Activated T-helper 1 cell treated with anti-CD3 and anti-CD28 coated beads, Interleukin-12 subunit alpha, Interleukin-12 subunit beta, Interleukin-2, Interleukin-4 antibody, amounts not matched to agents 30 ng/mL and 10 ng/mL and 1 ng/mL, durations not matched to agents 14 hours and 24 hours and 36 hours (primary cell): ENCODE measurements at regions of chr4 and their contacts with region 1.

Region 1: DNA sequence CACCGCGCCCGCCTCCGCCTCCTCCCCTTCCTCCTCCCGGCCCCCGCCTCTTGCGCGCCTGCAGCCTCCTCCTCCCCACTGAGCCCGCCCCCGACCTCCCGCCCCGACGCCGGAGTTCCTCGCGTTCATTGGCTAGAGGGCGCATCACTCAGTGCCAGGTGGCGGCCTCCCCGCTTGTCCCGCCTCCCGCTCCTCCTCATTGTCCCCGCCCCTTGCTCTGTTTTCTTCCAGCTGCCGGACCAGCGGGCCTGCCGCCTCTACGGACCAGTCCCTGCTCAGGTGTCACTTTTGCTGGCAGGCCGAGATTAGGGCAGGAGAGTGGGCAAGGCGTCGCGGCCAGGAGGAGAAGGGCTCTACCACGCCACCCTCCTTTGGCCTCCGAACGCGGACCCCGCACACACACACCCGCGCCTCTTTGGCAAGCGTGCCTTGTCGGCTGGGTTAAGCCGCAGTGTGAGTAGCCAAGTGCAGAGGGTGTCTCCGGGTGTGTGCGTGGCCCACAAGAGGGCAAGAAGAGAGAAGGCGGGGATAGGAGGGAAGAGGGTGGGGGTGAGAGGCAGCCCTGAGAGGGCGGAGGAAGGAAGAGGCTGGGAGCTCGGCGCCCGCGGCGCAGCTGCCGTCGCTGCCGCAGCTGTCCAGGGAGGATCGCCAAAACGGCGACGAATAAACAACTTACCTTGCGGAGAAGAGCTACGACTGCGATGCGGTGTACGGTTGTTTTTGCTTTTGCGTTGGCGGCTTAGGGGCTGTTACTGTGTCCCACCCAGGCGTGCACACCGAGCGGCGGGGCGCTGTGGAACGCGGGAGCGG is 436 bp upstream of the PPP3CA start:
- DNase-seq: peak; percentile 95
- H3K4me3 Mint-ChIP-seq: peak overlapping the region; percentile 92
- H3K27ac Mint-ChIP-seq: peak overlapping the region; percentile 88
- H3K4me1 Mint-ChIP-seq: peaks cover 33% of the 10 kb centered on the region
- H3K27me3 Mint-ChIP-seq: peaks cover 53% of the 10 kb centered on the region

Region 2: DNA sequence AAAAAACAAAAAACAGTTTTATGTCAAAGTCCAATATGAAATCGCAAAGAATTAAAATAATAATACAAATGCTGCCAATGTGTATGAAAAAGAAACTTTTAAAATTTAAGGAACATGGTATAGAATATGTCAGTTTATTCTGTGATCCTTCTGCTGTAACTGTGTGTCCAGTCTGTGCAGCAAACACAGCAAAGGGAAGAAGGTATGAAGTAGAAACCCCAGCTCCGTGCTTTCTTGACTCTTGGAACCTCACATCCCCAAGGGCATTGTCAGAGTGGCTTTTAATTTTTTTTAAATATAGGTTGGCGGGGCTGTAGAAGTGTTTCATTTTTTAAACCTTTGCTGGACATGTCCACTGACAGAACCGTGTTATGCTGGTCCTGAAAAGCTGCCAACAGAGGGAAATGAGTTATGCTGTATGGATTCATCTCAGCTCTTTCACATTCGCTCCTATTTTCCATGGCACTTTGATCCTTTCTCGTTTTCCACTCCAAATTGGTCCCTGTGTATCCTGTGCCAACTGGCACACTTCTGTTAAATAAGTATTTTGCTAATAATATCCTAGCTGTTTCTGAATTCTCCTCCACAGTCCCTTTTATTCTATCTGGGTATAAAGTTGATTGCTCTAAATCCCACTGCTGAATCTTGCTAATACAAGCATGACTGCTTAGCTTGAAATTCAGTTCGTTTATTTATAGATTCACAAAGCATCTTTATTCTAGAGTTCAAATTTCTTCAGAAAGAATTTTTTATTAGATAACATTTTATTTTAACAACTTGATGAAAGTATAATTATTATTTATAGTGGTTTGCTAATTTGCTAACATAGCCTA is 1030.5 kb before region 1 on chr4:
- intact Hi-C with region 1: no loop called
- DNase-seq: no peak
- H3K4me3 Mint-ChIP-seq: no peak overlapping the region
- H3K27ac Mint-ChIP-seq: no peak overlapping the region
- H3K4me1 Mint-ChIP-seq: no peaks in the 10 kb centered on the region
- H3K27me3 Mint-ChIP-seq: peaks cover 5% of the 10 kb centered on the region

Region 3: DNA sequence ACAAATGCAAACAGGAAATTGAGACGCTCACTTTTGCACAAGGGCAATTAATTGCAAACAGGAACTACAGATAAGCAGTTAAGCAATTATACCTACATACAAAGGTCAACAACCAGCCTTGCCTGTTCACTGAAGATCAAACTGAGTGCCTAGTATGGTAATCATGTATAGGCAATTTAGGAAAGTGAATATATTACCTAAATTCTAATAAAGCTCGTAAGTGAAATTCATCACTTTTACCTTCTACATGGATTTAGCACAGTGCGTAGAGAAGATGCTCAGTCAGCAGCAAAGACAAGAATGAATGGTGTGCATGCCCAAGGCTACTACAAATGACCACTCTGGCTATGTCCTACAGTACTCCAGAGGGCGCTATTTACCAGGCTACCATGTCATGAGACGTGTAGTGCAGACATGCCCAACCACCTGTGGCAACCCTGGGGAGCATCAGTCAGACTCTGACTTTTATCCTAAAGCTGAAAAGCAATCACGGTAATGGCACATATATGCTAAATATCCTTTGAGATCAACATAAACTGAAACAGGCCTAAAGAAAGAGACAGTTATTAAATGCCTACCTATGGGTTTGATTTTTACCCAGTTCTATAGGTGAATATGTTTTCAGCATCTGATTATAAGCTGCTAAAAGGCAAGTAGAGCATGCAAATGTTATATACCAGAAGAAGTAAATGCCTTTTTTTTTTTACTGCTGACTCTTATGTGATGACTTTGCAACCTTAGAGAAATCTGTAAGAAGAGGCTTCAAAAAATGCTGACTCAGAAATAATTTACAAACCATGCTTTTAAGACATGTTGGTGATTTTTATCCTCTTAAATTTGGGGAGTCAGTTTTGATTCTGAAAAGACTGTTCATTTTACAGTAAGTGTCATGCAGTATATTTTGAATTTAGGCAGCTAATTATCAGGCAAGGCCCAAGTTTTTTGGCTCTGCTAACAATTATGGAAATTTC is 178.4 kb before region 1 on chr4:
- intact Hi-C with region 1: loop called (anchors 5 kb)
- DNase-seq: peak; percentile 43
- H3K4me3 Mint-ChIP-seq: no peak overlapping the region
- H3K27ac Mint-ChIP-seq: no peak overlapping the region
- H3K4me1 Mint-ChIP-seq: no peaks in the 10 kb centered on the region
- H3K27me3 Mint-ChIP-seq: peaks cover 4% of the 10 kb centered on the region

Region 4: GRCh38 chr4:101282076-101282844 is 65.5 kb before region 1 on chr4:
- intact Hi-C with region 1: loop called (anchors 5 kb)
- DNase-seq: peak; percentile 8
- H3K4me3 Mint-ChIP-seq: peak overlapping the region; percentile 31
- H3K27ac Mint-ChIP-seq: no peak overlapping the region
- H3K4me1 Mint-ChIP-seq: peaks cover 43% of the 10 kb centered on the region
- H3K27me3 Mint-ChIP-seq: no peaks in the 10 kb centered on the region

Region 5: GRCh38 chr4:101337688-101338087 is 10.1 kb before region 1 on chr4:
- intact Hi-C with region 1: loop called (anchors 1 kb)
- DNase-seq: no peak
- H3K4me3 Mint-ChIP-seq: no peak overlapping the region
- H3K27ac Mint-ChIP-seq: no peak overlapping the region
- H3K4me1 Mint-ChIP-seq: peaks cover 29% of the 10 kb centered on the region
- H3K27me3 Mint-ChIP-seq: peaks cover 32% of the 10 kb centered on the region

Region 6: DNA sequence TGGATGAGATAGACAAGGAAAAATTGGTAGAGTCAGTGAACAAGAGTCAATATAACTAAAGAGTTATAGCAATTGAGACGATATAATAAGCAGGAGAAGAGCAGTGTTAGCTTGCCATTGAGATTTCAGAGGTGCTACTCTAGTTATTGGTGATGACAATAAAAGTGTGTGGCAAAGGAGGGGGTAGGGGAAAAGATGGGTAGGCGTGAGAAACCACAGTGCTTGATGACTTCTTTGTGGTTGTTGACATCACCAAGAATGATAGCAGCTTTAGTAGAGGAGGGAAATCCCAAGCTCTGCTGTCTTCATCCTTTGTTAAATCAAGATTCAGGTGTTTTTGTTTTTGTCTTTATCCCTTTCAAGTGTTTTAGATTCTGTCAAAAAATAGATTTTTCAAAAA is 179.4 kb after region 1 on chr4:
- intact Hi-C with region 1: loop called (anchors 1 kb)
- DNase-seq: peak; percentile 68
- H3K4me3 Mint-ChIP-seq: peak overlapping the region; percentile 8
- H3K27ac Mint-ChIP-seq: peak overlapping the region; percentile 67
- H3K4me1 Mint-ChIP-seq: peaks cover 32% of the 10 kb centered on the region
- H3K27me3 Mint-ChIP-seq: peaks cover 26% of the 10 kb centered on the region

Region 7: GRCh38 chr4:101724093-101724492 is 376.3 kb after region 1 on chr4:
- intact Hi-C with region 1: loop called (anchors 10 kb)
- DNase-seq: no peak
- H3K4me3 Mint-ChIP-seq: no peak overlapping the region
- H3K27ac Mint-ChIP-seq: no peak overlapping the region
- H3K4me1 Mint-ChIP-seq: peaks cover 6% of the 10 kb centered on the region
- H3K27me3 Mint-ChIP-seq: no peaks in the 10 kb centered on the region